ENCODE measurements at regions of chr5 and their contacts with region 1.

Region 1: GRCh38 chr5:122076664-122077365 is 1.2 kb downstream of the LOX start:
- H3K4me3 ChIP-seq: peak overlapping the region; percentile 36
- H3K27ac ChIP-seq: peak overlapping the region; percentile 63; the same call in 1 of the 2 replicates
- H3K4me1 ChIP-seq: peaks cover 3% of the 10 kb centered on the region; the same call in 1 of the 2 replicates
- CTCF ChIP-seq: peak; percentile 94

Region 2: GRCh38 chr5:121937762-121938161 is 139.1 kb before region 1 on chr5:
- CTCF ChIA-PET with region 1: no interaction called
- POLR2A ChIA-PET with region 1: no interaction called
- H3K4me3 ChIP-seq: no peak overlapping the region
- H3K27ac ChIP-seq: no peak overlapping the region
- H3K4me1 ChIP-seq: no peaks in the 10 kb centered on the region
- CTCF ChIP-seq: no peak

Region 3: DNA sequence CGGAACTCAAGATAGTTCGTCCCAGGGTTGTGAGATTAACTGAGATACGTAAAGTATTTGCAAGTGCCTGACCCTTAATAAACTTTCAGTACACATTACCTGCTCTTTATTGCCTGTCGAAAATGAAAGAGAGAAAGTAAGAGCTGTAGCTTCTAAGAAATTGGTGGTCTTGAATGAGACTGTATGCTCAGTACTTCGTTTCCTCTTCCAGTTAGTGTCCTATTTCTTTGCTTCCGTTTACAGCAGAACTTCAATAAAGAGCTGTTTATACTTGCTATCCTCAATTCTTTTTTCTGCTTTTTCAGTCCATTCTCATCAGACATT is 114.5 kb before region 1 on chr5:
- CTCF ChIA-PET with region 1: interaction called, 23 read pairs
- POLR2A ChIA-PET with region 1: interaction called, 4 read pairs
- H3K4me3 ChIP-seq: peak overlapping the region; percentile 94
- H3K27ac ChIP-seq: peak overlapping the region; percentile 63; the same call in 1 of the 2 replicates
- H3K4me1 ChIP-seq: peaks cover 6% of the 10 kb centered on the region; the same call in 1 of the 2 replicates
- CTCF ChIP-seq: no peak

Region 4: GRCh38 chr5:122062205-122062604 is 14.6 kb before region 1 on chr5:
- CTCF ChIA-PET with region 1: interaction called, 16 read pairs
- POLR2A ChIA-PET with region 1: no interaction called
- H3K4me3 ChIP-seq: no peak overlapping the region
- H3K27ac ChIP-seq: no peak overlapping the region
- H3K4me1 ChIP-seq: no peaks in the 10 kb centered on the region; the same call in 1 of the 2 replicates
- CTCF ChIP-seq: no peak

Region 5: DNA sequence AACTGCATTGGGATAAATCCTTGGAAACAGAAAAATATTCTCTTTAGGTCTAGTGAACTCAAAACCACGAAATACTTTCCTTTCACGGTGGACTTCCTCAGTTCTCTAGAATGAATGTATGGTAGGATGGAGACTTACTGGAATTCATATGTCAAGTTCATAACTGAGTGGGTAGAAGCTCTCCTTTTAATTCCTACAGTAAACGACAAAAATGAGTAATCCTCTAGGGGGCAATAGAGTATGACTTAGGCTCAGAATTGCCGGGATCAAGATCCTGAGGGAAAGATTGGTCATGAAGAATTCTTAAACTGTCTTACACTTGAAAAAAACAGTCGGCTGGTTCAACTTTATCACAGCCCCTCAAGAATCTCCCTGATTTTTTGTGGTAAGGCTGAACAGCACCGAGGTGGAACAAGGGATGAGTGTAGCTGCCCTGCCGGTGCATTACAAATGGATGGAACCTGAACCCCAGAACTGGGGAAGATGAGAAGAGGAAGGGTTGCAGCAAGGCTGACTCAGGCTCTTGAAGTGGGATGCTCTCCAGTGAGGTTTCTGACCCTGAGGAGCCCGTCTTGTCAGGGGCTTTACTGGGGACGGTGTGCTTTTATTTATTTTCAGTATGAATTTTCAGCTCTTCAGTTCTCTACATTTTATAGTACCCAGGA is 15.3 kb after region 1 on chr5:
- CTCF ChIA-PET with region 1: interaction called, 13 read pairs
- POLR2A ChIA-PET with region 1: no interaction called
- H3K4me3 ChIP-seq: no peak overlapping the region
- H3K27ac ChIP-seq: no peak overlapping the region
- H3K4me1 ChIP-seq: no peaks in the 10 kb centered on the region
- CTCF ChIP-seq: no peak